HCT116 (cell line): ENCODE measurements at regions of chr6 and their contacts with region 1.

Region 1: GRCh38 chr6:28606424-28607400 is 81.0 kb downstream of the GPX5 start:
- DNase-seq: peak; percentile 87
- ATAC-seq: peak; percentile 88
- H3K4me3 ChIP-seq: peak overlapping the region; percentile 40 to 53
- H3K27ac ChIP-seq: peak overlapping the region; percentile 46
- H3K4me1 ChIP-seq: peaks cover 11 to 39% of the 10 kb centered on the region in 2 experiments; a peak in 3 of 4 replicates
- H3K27me3 ChIP-seq: no peaks in the 10 kb centered on the region
- CTCF ChIP-seq: peak in 2 of 3 experiments; percentile 58 to 59; a peak in 4 of 6 replicates
- POLR2A ChIP-seq: no peak
- RAD21 ChIP-seq: no peak

Region 2: GRCh38 chr6:28648035-28648877 is 41.5 kb after region 1 on chr6:
- CTCF ChIA-PET with region 1: interaction called, 4 read pairs
- POLR2A ChIA-PET with region 1: no interaction called
- RAD21 ChIA-PET with region 1: no interaction called
- intact Hi-C with region 1: loop called (anchors 2 kb)
- DNase-seq: peak; percentile 75
- ATAC-seq: peak; percentile 71
- H3K4me3 ChIP-seq: peak overlapping the region; percentile 48 to 74
- H3K27ac ChIP-seq: peak overlapping the region; percentile 6; the same call in 1 of the 2 replicates
- H3K4me1 ChIP-seq: peaks cover 7 to 22% of the 10 kb centered on the region in 2 experiments; a peak in 3 of 4 replicates
- H3K27me3 ChIP-seq: no peaks in the 10 kb centered on the region
- CTCF ChIP-seq: no peak
- POLR2A ChIP-seq: no peak
- RAD21 ChIP-seq: no peak